Activated B cell treated with CpG ODN at 0.5 μM for 24 hours (primary cell): ENCODE measurements at regions of chr6 and their contacts with region 1.

Region 1: DNA sequence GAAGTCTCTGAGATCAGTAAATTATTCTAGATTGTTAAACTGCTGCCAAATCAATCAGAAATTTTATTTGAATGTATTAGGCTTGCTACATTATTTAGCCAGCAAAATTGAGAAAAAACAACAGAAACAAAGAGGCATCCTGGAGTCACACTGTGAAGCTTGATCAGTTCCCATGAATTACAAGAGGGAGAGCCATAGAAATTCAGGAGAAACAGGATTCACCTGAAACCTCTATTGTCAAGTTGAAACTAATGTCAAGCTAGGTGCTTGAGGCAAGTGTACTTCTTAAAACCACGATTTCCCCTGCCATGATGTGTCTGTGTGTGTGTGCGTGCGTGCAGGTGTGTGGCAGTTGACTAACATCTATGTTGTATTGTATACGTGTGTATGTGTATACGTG is 439.1 kb upstream of the NOX3 start:
- DNase-seq: no peak
- ATAC-seq: no peak
- H3K4me3 Mint-ChIP-seq: no peak overlapping the region
- H3K27ac Mint-ChIP-seq: no peak overlapping the region
- H3K4me1 Mint-ChIP-seq: no peaks in the 10 kb centered on the region
- H3K27me3 Mint-ChIP-seq: no peaks in the 10 kb centered on the region
- CTCF ChIP-seq: no peak

Region 2: GRCh38 chr6:155561257-155561965 is 333.3 kb before region 1 on chr6:
- CTCF ChIA-PET with region 1: no interaction called
- POLR2A ChIA-PET with region 1: no interaction called
- intact Hi-C with region 1: no loop called
- DNase-seq: no peak
- ATAC-seq: no peak
- H3K4me3 Mint-ChIP-seq: no peak overlapping the region
- H3K27ac Mint-ChIP-seq: no peak overlapping the region
- H3K4me1 Mint-ChIP-seq: no peaks in the 10 kb centered on the region
- H3K27me3 Mint-ChIP-seq: peaks cover 7% of the 10 kb centered on the region
- CTCF ChIP-seq: no peak

Region 3: DNA sequence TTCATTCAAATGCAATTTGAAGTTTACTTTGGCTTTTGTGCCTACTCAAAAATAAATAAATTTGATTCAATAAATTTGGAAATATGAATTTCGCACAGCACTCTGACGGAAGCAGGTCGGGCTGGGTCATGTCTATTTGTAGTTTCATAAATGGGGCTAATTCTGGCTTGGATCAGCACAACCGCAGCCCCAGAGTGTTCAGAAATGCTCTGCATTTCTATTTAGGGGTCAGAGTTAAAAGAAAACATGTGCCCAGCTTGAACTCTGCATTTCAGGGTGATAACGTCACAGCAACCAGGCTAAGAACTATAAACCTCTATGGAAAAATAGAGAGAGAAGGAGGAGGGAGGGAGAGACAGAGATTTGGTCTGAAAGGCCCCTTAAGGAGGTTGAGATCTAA is 41.8 kb after region 1 on chr6:
- CTCF ChIA-PET with region 1: no interaction called
- POLR2A ChIA-PET with region 1: no interaction called
- intact Hi-C with region 1: loop called (anchors 2 kb)
- DNase-seq: no peak
- ATAC-seq: no peak
- H3K4me3 Mint-ChIP-seq: no peak overlapping the region
- H3K27ac Mint-ChIP-seq: no peak overlapping the region
- H3K4me1 Mint-ChIP-seq: no peaks in the 10 kb centered on the region
- H3K27me3 Mint-ChIP-seq: no peaks in the 10 kb centered on the region
- CTCF ChIP-seq: no peak

Region 4: DNA sequence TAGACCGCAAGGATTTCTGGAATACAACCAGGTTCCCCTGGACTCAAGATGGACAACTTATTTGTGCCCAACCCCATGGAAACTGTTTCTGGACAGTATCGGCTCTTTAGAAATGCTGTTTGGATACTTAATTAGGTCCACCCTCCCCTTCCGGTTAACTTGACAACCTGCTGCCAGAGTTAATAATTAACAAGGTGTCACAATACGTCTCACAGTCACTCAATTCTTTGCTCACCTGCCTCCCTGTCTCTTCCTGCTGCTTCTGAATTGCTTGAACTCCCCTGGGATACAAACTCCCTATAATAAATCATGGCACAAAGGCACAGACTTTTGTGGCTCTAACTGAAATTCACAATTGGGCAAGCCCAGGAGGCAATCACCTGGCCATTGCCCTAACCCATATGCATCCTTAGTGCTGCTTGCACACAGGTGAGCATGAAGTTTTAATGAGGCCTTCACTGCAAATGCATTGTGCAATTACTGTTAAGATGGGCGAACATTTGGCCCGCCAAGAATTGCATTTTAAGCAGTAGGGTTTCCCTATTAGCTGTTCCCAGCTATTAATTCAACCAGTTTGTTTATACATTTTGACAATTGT is 65.2 kb after region 1 on chr6:
- CTCF ChIA-PET with region 1: no interaction called
- POLR2A ChIA-PET with region 1: no interaction called
- intact Hi-C with region 1: no loop called
- DNase-seq: no peak
- ATAC-seq: no peak
- H3K4me3 Mint-ChIP-seq: no peak overlapping the region
- H3K27ac Mint-ChIP-seq: no peak overlapping the region
- H3K4me1 Mint-ChIP-seq: peaks cover 3% of the 10 kb centered on the region
- H3K27me3 Mint-ChIP-seq: peaks cover 2% of the 10 kb centered on the region
- CTCF ChIP-seq: no peak